ENCODE measurements at regions of chr12 and their contacts with region 1.

Region 1: GRCh38 chr12:117367011-117367638 is 5.7 kb upstream of the NOS1 start:
- DNase-seq: peak; percentile 64
- ATAC-seq: peak in 1 of 2 donors; percentile 63

Region 2: GRCh38 chr12:116717466-116718437 is 649.4 kb before region 1 on chr12:
- intact Hi-C with region 1: no loop called
- DNase-seq: peak; percentile 75
- ATAC-seq: peak; percentile 74 to 85

Region 3: DNA sequence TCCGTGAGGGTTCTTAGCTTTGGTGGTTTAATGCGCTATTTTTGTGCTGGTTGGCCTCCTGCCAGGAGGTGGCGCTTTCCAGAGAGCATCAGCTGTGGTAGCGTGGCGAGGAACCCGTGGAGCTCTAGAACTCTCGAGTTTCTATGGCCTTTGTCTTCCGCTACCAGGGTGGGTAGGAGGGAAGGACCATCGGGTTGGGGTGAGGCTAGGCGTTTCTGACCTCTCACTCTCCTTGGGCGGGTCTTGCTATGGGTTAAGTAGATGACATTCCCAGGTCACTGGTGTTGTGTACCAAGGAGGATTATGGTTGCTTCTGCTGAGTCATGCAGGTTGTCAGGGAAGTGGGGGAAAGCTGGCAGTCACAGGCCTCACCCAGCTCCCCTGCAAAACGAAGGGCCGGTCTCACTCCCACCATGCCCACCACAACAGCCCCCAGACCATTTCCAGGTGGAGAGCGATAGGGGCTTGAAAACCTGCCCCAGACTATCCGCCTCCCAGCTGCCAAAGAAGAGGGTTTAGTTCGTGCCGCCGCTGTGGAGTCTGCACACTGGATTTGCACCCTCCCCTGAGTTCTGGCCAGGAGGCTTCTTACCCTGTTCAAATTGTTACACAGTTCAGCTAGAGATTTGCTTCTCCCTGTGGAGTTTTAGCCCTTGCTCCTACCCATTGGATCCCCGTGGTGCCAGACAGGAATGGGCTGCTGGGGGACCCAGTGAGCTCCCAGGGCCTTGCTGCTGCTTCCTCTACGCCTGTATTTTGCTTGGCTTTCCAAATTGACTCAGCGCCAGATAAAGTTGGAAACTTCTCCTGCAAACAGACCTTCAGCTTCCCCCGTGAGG is 607.1 kb before region 1 on chr12:
- intact Hi-C with region 1: no loop called
- DNase-seq: peak; percentile 58
- ATAC-seq: peak; percentile 56 to 91

Region 4: DNA sequence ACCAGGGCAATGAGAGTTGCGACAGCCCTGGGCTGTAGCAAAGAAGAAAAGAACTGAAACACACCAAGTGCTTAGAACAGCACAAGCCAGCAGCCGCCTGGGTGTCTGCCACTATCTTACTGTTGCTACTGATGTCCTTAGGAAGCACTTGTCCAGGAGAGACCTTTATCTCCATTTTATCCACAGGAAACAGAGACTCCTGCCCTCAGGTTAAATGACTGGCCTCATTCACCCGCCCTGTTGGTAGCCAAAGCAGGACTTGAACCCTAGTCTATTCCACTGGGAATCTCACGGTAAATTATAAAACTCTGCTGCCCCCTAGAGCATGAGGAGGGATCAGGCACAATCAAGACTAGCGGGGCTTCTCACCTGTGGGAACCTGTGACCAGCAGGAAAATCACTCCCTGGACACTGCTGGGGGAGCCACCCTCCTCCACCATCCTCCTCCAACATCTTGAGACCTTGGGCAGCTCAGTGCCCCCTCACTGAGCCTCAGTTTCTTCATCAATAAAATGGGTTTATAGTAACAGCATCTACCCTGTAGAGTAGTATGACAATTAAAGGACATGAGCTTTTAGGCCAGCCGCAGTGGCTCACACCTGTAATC is 247.4 kb before region 1 on chr12:
- intact Hi-C with region 1: no loop called
- DNase-seq: no peak
- ATAC-seq: peak; percentile 39 to 56

Region 5: DNA sequence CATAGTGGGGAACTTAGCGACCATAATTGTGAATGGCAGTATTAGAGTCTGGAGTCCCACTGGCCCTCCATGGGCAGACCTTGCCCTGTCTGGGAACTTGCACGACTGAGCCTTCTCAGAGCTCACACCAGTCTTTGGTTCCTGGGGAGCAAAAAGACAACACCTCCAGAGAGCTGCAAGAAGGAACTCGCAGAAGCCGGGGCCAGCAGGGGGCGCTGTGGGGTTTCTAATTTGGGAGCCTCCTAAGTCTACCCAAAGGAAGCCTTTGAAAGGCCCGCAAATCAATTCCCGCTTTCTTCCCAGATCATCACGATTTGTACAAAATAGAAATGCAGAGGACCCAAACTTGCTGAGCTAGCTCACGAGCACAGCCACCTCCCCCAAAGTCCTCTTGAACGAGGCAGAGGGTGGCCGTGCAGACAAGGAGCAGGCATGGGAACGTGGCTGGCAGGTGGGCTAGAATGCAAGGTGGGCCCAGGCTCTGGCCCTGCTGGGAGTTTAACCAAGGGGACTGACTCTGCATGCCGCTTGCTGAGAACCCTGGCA is 130.6 kb before region 1 on chr12:
- intact Hi-C with region 1: loop called in 1 of 2 experiments (anchors 5 kb)
- DNase-seq: peak; percentile 81
- ATAC-seq: peak in 1 of 2 donors; percentile 24

Region 6: GRCh38 chr12:117486840-117487659 is 119.9 kb after region 1 on chr12:
- intact Hi-C with region 1: no loop called
- DNase-seq: peak; percentile 60
- ATAC-seq: peak in 1 of 2 donors; percentile 92

Region 7: DNA sequence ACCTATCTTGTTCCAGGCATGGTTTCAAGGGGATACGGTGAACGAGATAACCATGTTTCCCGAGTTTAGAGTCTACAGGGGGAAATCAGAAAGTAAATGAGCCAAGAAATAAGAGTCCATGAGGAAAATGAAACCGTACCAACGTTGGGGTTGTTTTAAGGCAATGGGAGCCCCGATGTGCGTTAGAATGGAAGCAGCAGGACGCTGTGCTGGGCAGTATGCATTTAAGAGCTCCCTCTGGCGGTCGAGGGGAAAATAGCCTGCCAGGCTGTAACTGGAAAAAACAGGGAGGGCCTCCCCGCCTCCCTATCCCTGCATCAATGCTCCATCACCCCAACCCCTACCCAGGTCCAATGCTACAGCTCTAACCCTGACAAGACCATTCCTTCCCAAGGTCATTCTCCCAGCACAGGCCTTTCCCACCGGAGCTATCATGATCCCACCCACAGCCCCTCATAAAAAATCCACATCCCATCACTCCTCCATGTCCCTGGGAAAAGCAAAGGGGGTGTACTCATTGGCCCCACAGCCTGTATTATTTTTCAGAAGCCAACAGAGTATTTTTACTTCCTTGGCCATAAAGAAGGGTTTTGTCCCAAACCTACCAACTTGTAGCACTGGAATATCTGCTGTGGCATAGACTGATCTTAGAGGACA is 220.6 kb after region 1 on chr12:
- intact Hi-C with region 1: loop called (anchors 1 to 2 kb)
- DNase-seq: peak; percentile 60
- ATAC-seq: peak; percentile 30 to 51

Region 8: GRCh38 chr12:117671734-117672133 is 304.6 kb after region 1 on chr12:
- intact Hi-C with region 1: loop called in 1 of 2 experiments (anchors 5 kb)
- DNase-seq: peak; percentile 41
- ATAC-seq: no peak

Measured in left cardiac atrium (tissue), 4 donors.